Common myeloid progenitor, CD34-positive (primary cell): ENCODE measurements at regions of chr1 and their contacts with region 1.

Region 1: DNA sequence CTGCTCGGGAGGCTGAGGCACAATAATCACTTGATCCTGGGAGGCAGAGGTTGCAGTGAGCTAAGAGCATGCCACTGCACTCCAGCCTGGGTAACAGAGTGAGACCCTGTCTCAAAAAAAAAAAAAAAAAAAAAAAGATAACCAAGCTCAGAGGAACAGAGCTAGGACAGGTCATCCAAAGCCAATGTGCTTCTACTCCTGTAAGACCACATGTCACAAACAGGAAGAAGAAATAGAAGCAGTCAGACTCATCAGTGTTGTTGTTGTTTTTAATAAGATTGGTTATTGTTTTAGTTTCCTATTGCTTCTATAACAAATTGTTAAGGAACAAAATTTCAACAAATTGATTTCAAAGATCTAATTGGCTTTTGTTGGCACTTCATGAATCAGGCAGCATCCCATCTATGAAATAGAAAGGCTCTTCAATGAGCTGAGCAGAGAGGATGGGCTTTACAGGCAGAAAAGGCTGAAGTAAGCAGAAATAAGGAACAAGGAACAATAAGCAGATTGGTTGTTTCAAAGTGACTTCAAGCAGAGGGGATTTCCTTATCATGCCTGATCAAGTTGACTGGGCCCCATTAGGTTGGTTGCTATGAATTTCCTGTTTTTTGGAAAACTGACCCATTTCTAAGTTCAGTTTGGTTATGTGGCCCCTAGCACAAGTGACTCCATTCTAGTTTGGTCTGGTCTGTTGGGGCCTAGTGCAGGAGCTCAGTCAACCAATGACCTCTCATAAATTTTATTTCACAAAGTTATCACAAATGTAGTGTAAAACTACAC is 6.0 kb upstream of the AKNAD1 start:
- DNase-seq: peak in 2 of 3 donors; percentile 52 to 64
- H3K4me3 ChIP-seq: no peak overlapping the region
- H3K27ac ChIP-seq: no peak overlapping the region
- H3K4me1 ChIP-seq: peaks cover 3 to 23% (median 14%) of the 10 kb centered on the region in 4 experiments
- H3K27me3 ChIP-seq: no peaks in the 10 kb centered on the region

Region 2: DNA sequence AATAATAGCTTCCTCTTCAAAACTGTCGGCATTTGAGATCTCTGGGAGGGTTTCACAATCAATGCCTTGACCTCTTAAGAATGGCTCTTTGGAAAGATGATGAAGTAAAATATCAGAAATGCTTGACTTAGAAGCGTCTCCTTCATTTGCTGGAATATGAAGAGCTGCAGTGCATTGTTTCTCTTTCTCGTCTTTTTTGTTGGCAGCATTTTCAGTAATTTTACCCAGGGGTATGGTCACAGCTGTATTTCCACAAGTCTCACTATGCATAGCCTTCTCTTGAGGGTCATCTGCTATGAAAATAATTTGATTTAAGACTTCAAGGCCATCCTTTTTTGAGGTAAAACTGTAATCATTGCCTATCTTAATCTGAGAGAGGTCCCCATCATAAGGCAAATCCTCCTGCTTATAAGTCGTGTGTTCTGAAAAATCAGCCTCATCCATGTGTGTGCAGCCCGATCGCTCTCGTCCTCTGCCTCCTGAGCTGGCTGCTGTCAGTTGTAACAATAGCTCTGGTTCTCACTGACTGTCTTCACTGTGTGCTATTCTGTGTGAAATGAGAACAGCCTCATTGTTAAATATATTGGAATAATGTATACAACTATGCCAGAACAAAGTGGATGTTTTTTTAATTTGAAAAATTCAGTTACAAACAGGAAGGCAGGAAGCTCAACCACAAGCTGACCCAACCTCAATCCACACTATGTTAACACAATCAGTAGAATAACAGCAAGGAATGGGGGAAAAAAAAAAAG is 10.5 kb before region 1 on chr1:
- CTCF ChIA-PET with region 1: interaction called, 16 read pairs
- POLR2A ChIA-PET with region 1: interaction called, 3 read pairs
- DNase-seq: peak; percentile 38 to 89 (median 85)
- H3K4me3 ChIP-seq: peak overlapping the region in 5 of 7 experiments; percentile 8 to 63 (median 37)
- H3K27ac ChIP-seq: peak overlapping the region; percentile 93
- H3K4me1 ChIP-seq: peaks cover 24 to 79% (median 58%) of the 10 kb centered on the region in 4 experiments
- H3K27me3 ChIP-seq: no peaks in the 10 kb centered on the region

Region 3: DNA sequence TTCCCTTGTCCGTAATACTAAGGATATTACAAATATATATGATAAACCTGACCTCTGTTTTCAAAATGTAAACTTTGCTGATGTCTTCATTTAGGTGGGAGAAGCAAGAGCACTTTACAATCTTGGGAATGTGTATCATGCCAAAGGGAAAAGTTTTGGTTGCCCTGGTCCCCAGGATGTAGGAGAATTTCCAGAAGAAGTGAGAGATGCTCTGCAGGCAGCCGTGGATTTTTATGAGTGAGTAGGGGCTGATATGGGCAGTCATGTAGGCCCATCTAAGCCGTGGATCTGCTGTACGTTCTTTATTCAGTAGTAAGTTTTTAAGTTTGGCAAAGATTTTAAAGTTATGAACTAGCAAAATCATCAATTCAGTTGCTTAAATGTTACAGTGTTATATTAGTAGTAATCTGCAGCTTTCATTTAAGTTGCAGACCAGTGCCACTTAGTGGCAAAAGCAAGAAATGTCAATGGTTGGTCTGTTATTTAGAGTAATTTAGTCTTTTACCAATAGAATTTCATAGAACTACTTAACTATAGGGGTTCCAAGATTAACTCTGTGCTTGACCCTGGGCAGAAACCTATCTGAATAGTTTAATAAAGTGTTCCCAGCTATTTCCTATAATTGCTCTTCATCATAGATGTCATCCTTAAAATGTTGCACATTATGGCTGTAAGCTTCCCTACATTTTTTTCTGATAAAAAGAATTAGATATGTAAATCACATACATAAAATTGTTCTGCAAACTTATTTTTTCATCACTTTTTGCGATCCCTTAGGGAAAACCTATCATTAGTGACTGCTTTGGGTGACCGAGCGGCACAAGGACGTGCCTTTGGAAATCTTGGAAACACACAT is 35.2 kb after region 1 on chr1:
- CTCF ChIA-PET with region 1: interaction called, 18 read pairs
- POLR2A ChIA-PET with region 1: no interaction called
- DNase-seq: peak; percentile 77 to 88 (median 86)
- H3K4me3 ChIP-seq: no peak overlapping the region
- H3K27ac ChIP-seq: no peak overlapping the region
- H3K4me1 ChIP-seq: peaks cover 0 to 22% (median 3%) of the 10 kb centered on the region in 4 experiments
- H3K27me3 ChIP-seq: no peaks in the 10 kb centered on the region

Region 4: DNA sequence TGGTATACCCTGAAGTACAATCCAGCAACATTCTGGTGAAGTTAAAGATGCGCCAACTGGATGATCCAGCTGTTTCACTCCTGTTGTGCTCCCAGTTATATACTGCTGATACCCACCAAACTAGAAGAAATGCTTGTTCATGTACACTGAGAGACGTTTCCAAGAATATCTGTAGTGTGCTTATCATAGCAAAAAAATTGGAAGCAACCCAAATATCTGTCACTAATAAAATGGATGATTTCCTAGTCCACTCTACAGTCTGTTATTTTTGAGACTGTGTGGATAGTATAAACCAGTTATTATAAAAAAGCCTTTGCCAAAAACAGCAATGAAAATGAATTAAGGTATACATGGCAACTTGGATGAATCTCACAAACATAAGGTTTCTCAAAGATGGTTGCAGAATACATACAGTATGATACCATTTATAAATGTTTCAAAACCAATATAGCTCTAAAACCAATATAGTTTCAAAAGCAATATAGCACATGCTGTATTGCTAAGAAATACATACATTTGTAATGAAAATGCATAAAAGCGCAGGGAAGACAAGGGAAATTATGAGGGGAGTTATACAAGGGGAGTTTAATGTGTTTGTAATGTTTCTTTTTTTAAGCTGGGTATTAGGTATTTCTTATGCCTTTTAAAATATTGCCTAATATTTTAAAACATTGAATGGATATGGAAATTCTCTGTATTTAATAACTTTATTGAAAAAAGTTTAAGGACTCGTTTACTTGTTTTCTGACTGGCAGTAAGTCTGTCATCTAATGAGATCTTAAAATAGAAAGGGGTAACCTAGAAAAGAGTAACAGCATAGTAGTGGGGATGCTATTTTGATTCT is 50.4 kb after region 1 on chr1:
- CTCF ChIA-PET with region 1: no interaction called
- POLR2A ChIA-PET with region 1: no interaction called
- DNase-seq: peak in 2 of 3 donors; percentile 32 to 40
- H3K4me3 ChIP-seq: no peak overlapping the region
- H3K27ac ChIP-seq: peak overlapping the region in 1 of 2 experiments; percentile 59
- H3K4me1 ChIP-seq: peaks cover 0 to 6% (median 3%) of the 10 kb centered on the region in 4 experiments
- H3K27me3 ChIP-seq: no peaks in the 10 kb centered on the region

Region 5: GRCh38 chr1:109213785-109214468 is 351.0 kb after region 1 on chr1 and contains the start of gene SARS1:
- CTCF ChIA-PET with region 1: no interaction called
- POLR2A ChIA-PET with region 1: no interaction called
- DNase-seq: peak; percentile 80 to 85 (median 83)
- H3K4me3 ChIP-seq: peak within 1 kb of the TSS; percentile 87 to 95 (median 94)
- H3K27ac ChIP-seq: peak within 1 kb of the TSS in 1 of 2 experiments; percentile 74
- H3K4me1 ChIP-seq: peaks cover 7 to 21% (median 12%) of the 10 kb centered on the region in 4 experiments
- H3K27me3 ChIP-seq: peaks cover 0 to 46% (median 25%) of the 10 kb centered on the region in 5 experiments